Activated CD4-positive, alpha-beta T cell treated with anti-CD3 and anti-CD28 coated beads, Interleukin-2, amount 10 ng/mL, durations not matched to agents 24 days and 14 days (primary cell): ENCODE measurements at regions of chr17 and their contacts with region 1.

Region 1: GRCh38 chr17:7856883-7857723 is at the start of gene NAA38:
- DNase-seq: peak; percentile 98
- H3K4me3 Mint-ChIP-seq: no peak within 1 kb of the TSS
- H3K27ac Mint-ChIP-seq: no peak within 1 kb of the TSS
- H3K4me1 Mint-ChIP-seq: peaks cover 16% of the 10 kb centered on the region
- H3K27me3 Mint-ChIP-seq: no peaks in the 10 kb centered on the region
- total RNA-seq, gene NAA38: 45.2 and 47.5 TPM in 2 replicates

Region 2: DNA sequence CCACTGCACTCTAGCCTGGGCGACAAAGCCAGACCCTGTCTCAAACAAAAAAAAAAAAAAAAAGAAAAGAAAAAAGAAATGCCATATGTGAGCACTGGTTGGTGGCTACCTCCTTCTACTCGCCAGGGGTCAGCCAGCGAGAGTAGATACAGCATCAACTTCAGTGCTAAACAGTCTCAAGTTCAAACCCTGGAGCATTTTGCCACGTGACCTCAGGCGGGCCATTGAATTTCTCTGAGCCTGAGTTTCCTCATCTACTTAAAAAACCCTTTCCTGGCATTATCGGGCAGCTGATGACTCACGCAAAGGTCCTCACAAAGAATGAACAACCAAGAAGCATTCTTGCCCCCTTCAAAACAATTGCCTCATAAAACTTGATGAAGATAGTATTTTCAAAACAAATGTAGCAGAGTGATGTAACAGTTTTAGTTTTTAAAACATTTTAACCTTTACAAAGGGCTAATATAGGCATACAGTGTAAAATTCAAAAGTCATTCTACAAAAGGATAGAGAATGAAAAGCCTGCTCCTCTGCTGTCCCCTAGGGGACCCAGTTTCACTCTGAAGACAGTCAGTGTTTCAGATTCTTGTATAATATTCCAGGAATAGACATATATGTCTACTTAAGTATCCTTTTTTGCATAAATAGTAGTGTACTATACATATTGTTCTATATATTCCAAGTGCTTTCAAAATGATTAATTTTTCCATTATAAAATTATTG is 111.2 kb before region 1 on chr17:
- intact Hi-C with region 1: loop called (anchors 10 kb)
- DNase-seq: no peak
- H3K4me3 Mint-ChIP-seq: no peak overlapping the region
- H3K27ac Mint-ChIP-seq: no peak overlapping the region
- H3K4me1 Mint-ChIP-seq: no peaks in the 10 kb centered on the region
- H3K27me3 Mint-ChIP-seq: peaks cover 18% of the 10 kb centered on the region

Region 3: DNA sequence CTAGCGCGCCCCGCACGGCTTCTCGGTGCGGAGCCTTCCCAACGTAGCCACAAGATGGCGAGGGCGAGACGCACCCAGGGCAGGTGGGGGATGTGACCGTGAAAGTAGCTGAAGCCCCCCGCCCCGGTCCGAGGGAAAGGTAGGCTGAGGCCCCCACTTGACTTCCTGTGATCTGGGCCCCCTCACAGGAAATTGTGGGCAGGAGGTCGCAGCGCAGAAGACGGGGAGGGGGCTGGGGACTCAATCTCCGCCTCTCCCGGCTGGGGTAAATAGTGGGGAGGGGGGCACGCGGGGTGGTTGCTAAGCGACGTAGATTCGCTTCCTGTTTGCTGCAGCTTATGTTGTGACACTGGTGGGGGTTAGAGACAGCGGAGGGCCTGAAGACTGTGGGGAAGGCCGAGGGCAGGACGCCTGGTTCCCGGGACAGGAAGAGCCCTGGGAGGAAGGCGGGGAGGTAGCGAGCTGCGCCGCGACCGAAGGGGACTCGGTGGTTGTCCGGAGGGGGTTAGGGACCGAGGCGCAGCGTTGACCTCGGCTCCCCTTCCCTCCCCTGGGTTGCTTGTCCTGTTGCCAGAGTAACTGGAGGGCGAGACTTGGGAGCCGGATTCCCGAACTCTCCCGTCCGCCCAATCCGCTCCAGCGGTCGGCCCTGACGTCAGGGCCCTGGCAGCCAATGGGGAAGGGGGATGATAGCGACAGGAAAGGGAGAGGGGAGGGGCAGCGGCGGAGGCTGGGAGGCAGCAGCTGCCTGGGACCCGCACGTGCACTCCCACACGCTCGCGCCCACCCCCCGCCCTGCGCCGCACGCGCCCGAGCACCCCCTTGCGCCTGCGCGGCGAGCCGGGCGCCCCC is 21.9 kb before region 1 on chr17:
- intact Hi-C with region 1: loop called (anchors 1 kb)
- DNase-seq: peak; percentile 94
- H3K4me3 Mint-ChIP-seq: peak overlapping the region; percentile 87
- H3K27ac Mint-ChIP-seq: peak overlapping the region; percentile 95
- H3K4me1 Mint-ChIP-seq: peaks cover 50% of the 10 kb centered on the region
- H3K27me3 Mint-ChIP-seq: peaks cover 17% of the 10 kb centered on the region

Region 4: DNA sequence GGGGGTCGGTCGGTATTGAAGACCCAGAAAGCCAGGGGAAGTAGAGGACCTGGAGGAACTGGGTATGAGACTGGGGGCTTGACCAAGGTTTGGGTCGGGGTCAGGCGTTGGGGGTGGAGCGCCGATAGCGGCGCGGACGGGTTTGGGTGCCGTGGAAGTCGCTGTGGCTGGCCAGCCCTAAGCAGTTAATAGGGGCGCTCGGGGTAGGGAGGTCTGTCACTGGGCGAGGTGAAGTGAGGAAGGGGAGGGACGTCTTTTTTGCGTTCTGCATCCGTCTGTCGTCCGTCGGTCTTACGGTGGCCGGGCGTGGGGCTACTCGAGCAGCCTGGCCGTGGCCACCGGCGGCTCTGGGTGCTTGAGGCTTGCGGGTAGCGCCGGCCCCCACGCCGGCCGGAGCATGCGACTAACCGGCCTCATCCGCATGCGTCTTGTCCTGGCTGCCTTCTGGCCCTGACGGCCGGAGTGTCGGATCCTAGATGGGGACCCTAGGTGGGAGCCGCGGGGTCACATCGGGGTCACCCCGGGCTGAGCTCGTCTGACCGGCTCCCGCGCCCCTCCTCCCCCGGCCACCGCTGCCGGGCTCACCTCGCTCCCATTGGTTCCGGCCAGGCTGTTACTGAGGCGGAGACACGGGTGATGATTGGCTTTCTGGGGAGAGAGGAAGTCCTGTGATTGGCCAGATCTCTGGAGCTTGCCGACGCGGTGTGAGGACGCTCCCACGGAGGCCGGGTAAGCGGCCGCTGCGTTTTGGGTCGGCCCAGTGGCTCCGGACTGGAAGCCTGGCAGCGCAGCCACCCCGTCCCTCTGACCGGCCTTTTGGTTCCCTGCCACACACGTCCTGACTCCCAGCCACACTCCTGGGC is 12.6 kb before region 1 on chr17:
- intact Hi-C with region 1: loop called (anchors 1 kb)
- DNase-seq: peak; percentile 96
- H3K4me3 Mint-ChIP-seq: peak overlapping the region; percentile 99
- H3K27ac Mint-ChIP-seq: peak overlapping the region; percentile 100
- H3K4me1 Mint-ChIP-seq: peaks cover 37% of the 10 kb centered on the region
- H3K27me3 Mint-ChIP-seq: peaks cover 2% of the 10 kb centered on the region

Region 5: DNA sequence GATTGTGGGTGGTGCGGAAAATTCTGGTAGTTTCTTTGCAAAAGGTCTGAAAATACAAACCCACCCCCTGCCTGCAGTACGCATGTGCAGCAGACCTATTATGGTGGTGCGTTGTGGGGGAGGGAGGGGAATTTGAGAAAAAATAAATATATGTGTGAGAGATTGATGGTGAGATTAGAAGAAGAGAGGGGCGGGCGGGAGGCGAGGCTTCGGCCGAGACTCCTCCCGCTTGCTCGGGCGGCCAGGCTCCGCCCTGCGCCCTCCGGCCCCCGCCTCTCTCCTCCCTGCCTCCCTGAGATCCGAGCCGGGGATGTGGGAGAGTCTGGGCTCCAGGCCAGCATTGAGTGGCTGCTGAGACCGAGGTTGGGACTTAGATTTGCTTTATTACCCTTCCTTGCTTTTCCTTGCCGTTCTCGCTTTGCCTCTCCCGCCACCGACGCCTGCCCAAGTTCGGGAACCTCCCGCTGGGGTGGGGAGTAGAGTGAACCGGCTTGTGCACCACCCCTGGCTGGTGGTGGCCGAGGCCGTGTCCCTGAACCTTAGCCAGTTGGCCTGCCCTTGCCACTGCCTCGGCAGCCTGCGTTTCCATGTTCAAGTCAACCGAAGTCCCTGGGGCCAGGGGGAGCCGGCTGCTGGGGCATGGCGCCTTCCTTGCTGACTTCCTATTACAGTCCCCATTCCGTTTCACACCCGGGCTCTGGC is 30.5 kb after region 1 on chr17:
- intact Hi-C with region 1: loop called (anchors 1 kb)
- DNase-seq: peak; percentile 95
- H3K4me3 Mint-ChIP-seq: no peak overlapping the region
- H3K27ac Mint-ChIP-seq: no peak overlapping the region
- H3K4me1 Mint-ChIP-seq: peaks cover 9% of the 10 kb centered on the region
- H3K27me3 Mint-ChIP-seq: no peaks in the 10 kb centered on the region

Region 6: DNA sequence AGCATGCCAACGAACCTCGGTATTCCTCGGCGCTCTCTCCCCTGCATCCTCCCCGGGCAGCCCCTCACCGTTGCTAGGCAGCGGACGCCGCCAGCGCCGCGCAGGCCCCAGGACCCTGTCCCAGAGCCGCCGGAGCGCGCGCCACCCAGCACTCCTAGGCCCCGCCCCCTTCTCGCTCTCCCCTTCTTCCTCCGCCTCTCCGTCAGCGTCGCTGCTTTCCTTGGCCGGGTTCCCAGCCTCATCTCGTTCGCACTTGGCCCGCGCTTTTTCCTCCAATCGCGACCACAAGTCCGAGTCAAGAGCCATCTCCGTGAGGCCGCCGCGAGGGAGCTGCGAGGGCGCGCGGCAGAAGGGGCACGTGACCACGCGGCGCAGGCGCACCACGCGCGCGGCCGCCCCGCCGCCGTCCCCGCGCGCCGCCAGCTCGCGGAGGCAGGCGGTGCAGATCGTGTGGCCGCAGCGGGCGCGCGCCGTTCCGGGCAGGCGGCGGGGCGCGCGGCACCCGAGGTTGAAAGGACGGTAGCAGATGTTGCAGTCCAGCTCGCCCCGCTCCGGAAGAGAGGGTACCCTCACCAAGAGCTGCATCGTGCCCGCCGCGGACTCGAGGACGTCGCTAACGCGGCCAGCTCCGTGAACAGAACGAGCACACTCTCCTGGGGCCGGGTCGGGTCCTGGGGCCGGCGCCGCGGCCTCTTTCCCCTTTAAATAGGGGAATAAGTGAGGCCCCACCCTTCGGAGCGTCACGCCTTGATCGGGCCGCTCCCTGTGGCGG is 58.7 kb after region 1 on chr17 and contains the start of gene RNF227:
- intact Hi-C with region 1: loop called (anchors 1 kb)
- DNase-seq: peak; percentile 94
- H3K4me3 Mint-ChIP-seq: peak within 1 kb of the TSS; percentile 97
- H3K27ac Mint-ChIP-seq: peak within 1 kb of the TSS; percentile 97
- H3K4me1 Mint-ChIP-seq: peaks cover 26% of the 10 kb centered on the region
- H3K27me3 Mint-ChIP-seq: no peaks in the 10 kb centered on the region
- total RNA-seq, gene RNF227: 6.2 and 6.5 TPM in 2 replicates